Right cardiac atrium (tissue), 5 donors: ENCODE measurements at regions of chr5 and their contacts with region 1.

Region 1: DNA sequence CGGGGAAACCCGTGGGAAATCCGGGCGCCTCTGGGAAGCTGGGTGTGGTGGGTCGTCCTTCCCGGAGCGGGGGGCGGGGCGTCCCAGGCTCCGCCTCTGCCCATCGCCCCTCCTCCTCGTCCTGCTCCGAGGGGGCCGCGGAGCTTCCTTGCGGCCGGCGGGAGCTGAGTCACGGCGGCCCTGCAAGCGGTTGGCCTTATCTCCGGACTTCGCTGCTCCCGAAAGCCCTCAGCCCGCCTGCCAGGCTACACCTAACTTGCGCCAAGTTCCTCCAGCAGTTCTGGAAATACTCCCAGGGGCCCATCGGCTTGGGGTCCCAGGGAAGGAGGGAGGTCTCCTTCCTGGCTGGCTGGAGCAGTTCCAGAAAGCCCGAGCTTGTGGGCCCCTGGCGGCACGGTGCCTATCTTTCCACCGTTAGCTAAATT is 54.1 kb upstream of the CDKN2AIPNL start:
- DNase-seq: peak; percentile 94 to 97 (median 96)
- ATAC-seq: peak; percentile 91
- H3K4me3 ChIP-seq: peak overlapping the region; percentile 51
- H3K27ac ChIP-seq: peak overlapping the region; percentile 98
- H3K4me1 ChIP-seq: peaks cover 15% of the 10 kb centered on the region
- H3K27me3 ChIP-seq: no peaks in the 10 kb centered on the region

Region 2: GRCh38 chr5:134411546-134412266 is 54.1 kb before region 1 on chr5 and contains the start of gene CDKN2AIPNL:
- intact Hi-C with region 1: loop called in 1 of 4 experiments (anchors 5 kb)
- DNase-seq: peak; percentile 94 to 97 (median 97)
- ATAC-seq: peak; percentile 99
- H3K4me3 ChIP-seq: peak within 1 kb of the TSS; percentile 81
- H3K27ac ChIP-seq: peak within 1 kb of the TSS; percentile 73
- H3K4me1 ChIP-seq: peaks cover 2% of the 10 kb centered on the region
- H3K27me3 ChIP-seq: no peaks in the 10 kb centered on the region
- total RNA-seq, gene CDKN2AIPNL: 33.5 to 42.0 (median 37.5) TPM

Region 3: DNA sequence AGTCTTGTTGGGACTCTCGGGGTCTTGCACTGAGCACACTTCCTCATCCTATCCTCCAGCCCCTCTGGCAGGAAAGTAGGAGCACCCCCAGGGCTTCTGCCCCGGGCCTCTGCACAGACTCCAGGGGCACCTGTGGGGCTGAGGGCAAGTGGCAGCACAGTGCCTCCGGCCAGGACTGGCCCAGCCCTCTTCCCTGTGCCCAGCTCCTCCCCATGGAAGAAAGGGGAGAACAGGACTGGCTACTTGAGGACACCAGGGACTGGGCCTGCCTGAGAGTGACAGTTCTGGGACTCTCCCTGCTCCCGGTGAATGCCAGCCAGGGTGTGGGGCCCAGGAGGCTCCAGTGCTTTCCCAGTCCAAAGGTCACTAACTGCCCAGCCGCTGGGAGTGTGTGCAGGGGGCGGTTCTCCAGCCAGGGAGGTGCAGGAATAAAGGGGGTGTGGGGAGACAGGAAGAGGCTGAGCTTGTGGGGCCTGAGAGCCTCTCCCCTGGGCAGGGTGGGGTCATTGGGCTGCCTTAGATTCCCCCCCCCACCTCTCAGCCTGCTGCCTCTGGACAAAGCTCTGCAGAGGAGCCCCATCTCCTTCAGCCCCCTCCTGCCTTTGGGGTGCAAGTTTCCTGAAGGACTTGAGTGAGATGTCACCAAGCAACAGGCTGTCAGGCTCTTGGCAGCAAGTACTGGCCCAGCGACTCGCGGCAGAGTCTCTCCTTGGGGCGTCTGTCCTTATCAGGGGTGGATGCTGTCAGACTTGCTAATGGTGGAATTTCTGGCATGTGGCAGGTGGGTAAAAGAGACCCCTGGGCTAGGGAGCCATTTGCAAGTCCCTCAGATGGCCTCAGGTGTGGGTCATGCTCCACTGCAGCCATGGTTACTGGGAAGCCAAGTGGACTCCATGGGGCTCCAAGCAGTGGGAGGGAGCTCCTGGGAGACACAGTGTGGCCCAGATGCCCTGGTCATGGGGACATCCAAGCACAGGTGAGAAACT is 40.5 kb after region 1 on chr5:
- intact Hi-C with region 1: loop called in 2 of 4 experiments (anchors 5 kb)
- DNase-seq: peak; percentile 87 to 90 (median 88)
- ATAC-seq: peak; percentile 89 to 92
- H3K4me3 ChIP-seq: no peak overlapping the region
- H3K27ac ChIP-seq: peak overlapping the region; percentile 48
- H3K4me1 ChIP-seq: peaks cover 9% of the 10 kb centered on the region
- H3K27me3 ChIP-seq: no peaks in the 10 kb centered on the region

Region 4: DNA sequence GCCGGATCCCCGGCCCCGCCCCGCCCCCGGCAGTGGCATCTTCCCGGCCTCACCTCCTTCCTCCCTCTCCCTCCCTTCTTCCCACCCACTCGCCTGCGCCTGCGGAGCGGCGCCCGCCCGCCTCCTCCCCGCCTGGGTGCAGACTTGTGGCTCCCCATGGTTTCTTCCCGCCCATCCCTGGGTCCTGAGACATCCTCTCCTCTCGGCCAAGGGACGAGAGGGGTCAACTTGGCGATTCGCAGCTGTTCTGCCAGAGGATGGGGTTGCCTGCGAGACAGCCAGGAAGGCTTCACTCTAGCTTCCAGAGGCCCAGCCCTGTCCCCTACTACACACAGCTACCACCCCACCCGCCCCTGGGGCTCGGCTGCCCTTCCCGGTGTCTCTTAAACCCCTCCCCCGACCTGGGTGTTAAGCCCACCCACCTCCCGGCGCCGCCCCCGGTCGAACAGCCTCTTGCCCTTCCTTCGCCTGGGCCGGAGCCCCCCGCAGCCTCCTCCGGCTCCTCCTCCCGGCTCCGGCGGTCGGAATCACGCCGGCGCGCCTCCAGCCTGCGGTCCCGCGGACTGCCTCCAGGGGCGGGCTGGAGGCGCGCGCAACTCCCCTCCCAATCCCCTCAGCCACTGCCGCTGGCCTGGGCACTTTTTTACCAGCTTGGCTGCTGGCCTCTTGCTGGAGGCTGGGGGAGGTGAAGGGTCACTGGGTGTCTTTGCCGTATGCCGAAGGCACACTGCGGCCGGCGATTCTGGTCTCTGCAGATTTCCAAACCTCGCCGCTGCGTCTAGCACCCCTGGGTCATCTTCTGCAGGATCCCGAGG is 61.5 kb after region 1 on chr5:
- intact Hi-C with region 1: loop called (anchors 2 to 10 kb)
- DNase-seq: peak; percentile 92 to 96 (median 96)
- ATAC-seq: peak; percentile 66 to 72
- H3K4me3 ChIP-seq: peak overlapping the region; percentile 95
- H3K27ac ChIP-seq: peak overlapping the region; percentile 94
- H3K4me1 ChIP-seq: peaks cover 26% of the 10 kb centered on the region
- H3K27me3 ChIP-seq: no peaks in the 10 kb centered on the region

Region 5: DNA sequence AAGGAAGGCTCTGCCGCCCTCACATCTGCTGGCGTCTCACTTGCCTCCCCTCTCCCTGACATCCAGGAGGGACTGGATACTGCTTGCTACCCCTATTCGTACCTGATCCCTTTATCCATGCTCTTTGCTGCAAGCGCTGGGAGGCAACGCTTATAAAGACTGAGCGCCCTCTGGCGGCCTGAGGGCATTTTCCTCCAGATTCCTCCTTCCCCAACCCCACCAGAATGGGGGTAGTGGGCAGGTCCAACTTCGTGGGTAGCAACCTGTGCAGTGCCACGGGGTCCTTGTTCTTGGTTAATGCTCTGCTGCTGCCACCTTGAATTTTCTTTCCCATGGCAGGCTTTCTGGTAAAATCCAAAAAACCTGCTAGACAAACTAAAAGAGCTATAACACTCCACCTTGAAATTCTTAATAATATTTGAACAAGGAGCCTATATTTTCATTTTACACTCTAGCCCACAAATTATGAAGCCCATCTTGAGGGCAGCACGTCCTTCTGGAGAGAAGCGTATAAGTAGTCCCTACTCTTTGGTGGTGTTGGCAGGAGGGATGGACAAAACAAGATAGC is 112.1 kb after region 1 on chr5:
- intact Hi-C with region 1: loop called in 1 of 4 experiments (anchors 10 kb)
- DNase-seq: peak; percentile 81 to 93 (median 89)
- ATAC-seq: peak; percentile 41 to 60
- H3K4me3 ChIP-seq: no peak overlapping the region
- H3K27ac ChIP-seq: no peak overlapping the region
- H3K4me1 ChIP-seq: peaks cover 4% of the 10 kb centered on the region
- H3K27me3 ChIP-seq: no peaks in the 10 kb centered on the region